ENCODE measurements at regions of chr2 and their contacts with region 1.

Region 1: DNA sequence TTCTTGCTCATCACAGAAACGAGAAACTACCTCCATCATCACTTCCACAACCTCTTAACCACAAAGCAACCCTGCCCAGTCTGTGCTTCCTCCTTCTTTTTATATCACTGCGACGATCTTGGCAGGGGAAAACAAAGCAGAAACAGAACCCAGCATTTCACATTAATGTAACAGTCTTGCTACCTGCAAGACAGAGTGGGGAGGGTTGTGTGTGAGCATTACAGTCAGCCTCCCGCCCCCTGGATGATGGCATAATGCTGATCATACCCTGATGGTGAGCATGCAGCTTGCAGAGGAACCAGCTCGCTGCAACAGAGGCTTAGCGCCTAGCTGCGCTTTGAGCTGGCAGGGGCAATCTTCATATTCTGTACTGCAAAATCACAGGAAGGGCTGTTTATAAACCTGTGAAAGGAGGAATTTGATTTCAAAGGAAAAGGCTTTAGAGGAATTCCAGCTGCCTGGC is 376.1 kb downstream of the IRS1 start:
- DNase-seq: peak in 1 of 2 experiments; percentile 41
- H3K4me3 ChIP-seq: no peak overlapping the region
- H3K27ac ChIP-seq: no peak overlapping the region
- H3K4me1 ChIP-seq: peaks cover 31% of the 10 kb centered on the region
- H3K27me3 ChIP-seq: no peaks in the 10 kb centered on the region
- CTCF ChIP-seq: no peak

Region 2: DNA sequence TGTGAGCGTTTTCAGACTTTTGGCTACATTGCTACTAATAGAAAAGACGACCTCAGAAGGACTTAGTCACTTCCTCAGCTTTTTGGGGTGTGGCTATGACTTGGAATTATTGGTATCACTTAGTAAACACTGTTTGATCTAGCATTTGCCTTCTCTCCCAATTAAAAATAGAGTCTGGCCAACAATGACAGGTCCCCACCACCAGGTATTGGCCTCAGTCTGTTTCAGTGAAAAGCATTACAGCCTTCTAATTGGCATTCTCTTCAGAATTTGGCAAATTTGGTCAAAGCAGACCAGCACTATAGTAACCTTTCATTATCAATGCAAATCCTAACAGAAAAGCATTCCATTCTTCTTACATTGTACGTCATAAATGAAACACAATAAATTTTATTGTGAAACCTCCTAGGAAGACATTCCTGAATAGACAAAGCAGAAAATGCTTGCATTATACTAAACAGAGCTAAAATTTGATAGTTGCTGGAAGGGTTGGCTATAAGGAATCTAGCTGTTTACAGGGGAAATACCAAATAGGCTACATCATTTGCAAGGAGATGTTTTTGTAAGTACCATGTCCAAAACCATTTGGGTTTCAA is 237.8 kb before region 1 on chr2:
- CTCF ChIA-PET with region 1: no interaction called
- POLR2A ChIA-PET with region 1: no interaction called
- intact Hi-C with region 1: loop called (anchors 5 kb)
- DNase-seq: peak; percentile 26 to 70
- H3K4me3 ChIP-seq: no peak overlapping the region
- H3K27ac ChIP-seq: peak overlapping the region; percentile 77
- H3K4me1 ChIP-seq: peaks cover 19% of the 10 kb centered on the region
- H3K27me3 ChIP-seq: no peaks in the 10 kb centered on the region
- CTCF ChIP-seq: no peak

Region 3: DNA sequence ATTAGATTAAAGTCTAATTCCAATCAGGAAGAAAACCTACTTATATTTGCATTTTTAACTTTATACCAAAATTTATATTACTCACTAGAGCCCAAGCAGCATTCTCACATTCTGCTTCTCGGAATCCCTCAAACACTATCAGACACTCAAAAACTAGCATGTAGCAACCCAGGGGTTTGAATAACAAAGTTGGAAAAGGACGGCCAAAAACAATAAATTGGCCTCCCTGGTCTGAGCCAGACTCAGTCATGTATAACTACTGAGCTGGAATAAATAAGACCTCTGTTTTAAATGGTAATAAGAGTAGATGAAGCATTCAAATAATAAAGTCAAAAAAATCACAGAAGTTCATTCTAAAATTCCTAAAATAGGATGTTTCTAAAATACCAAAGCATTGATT is 85.2 kb after region 1 on chr2:
- CTCF ChIA-PET with region 1: no interaction called
- POLR2A ChIA-PET with region 1: no interaction called
- intact Hi-C with region 1: no loop called
- DNase-seq: no peak
- H3K4me3 ChIP-seq: no peak overlapping the region
- H3K27ac ChIP-seq: no peak overlapping the region
- H3K4me1 ChIP-seq: no peaks in the 10 kb centered on the region
- H3K27me3 ChIP-seq: no peaks in the 10 kb centered on the region
- CTCF ChIP-seq: no peak

Region 4: GRCh38 chr2:227744276-227744675 is 1320.7 kb after region 1 on chr2:
- CTCF ChIA-PET with region 1: no interaction called
- POLR2A ChIA-PET with region 1: no interaction called
- intact Hi-C with region 1: no loop called
- DNase-seq: no peak
- H3K4me3 ChIP-seq: no peak overlapping the region
- H3K27ac ChIP-seq: no peak overlapping the region
- H3K4me1 ChIP-seq: no peaks in the 10 kb centered on the region
- H3K27me3 ChIP-seq: no peaks in the 10 kb centered on the region
- CTCF ChIP-seq: no peak

Measured in PC-9 (cell line).